ENCODE measurements at regions of chr21 and their contacts with region 1.

Region 1: DNA sequence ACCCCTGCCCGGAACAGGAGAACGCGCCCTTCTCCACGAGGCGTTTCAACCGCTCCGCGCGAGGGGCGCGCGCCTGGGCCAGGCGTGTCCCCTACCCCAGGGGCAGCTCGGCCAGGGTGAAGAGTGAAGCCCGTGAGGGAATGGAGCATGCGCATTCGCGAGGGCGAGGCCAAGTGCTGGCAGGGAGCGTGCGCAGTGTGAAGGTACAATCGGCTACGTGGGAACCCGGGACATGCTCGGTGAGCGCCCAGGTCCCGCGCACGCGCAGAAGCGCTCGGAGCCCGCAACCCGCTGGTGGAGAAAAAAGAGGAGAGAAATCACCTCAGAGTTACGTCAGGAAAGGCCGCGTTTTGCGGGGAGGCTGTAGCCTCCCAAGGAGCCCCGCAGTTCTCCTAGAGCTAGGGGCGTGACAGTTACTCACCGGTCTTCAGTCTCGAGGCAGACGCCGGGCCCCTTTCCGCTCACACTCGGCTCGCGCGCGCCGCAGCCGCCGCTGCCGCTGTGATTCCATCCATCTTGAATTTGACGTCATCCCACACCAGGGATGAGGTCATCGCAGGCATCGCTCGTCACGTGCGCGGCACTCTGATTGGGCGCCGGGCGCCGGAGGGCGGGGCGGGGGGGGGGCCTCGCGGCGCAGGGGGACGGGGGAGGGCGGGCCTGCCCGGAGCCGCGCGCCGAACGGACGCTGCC is at the start of gene ZBTB21:
- DNase-seq: peak; percentile 99
- H3K4me3 ChIP-seq: peak within 1 kb of the TSS; percentile 80
- H3K27ac ChIP-seq: peak within 1 kb of the TSS; percentile 99
- H3K4me1 ChIP-seq: no peaks in the 10 kb centered on the region
- H3K27me3 ChIP-seq: no peaks in the 10 kb centered on the region
- CTCF ChIP-seq: no peak
- total RNA-seq, gene ZBTB21: 10.2 to 15.1 TPM

Region 2: GRCh38 chr21:41884501-41885030 is 125.4 kb before region 1 on chr21:
- intact Hi-C with region 1: loop called (anchors 5 kb)
- DNase-seq: no peak
- H3K4me3 ChIP-seq: no peak overlapping the region
- H3K27ac ChIP-seq: no peak overlapping the region
- H3K4me1 ChIP-seq: no peaks in the 10 kb centered on the region
- H3K27me3 ChIP-seq: no peaks in the 10 kb centered on the region
- CTCF ChIP-seq: no peak

Region 3: GRCh38 chr21:42107881-42108553 is 98.0 kb after region 1 on chr21:
- intact Hi-C with region 1: loop called (anchors 5 kb)
- DNase-seq: peak; percentile 65
- H3K4me3 ChIP-seq: no peak overlapping the region
- H3K27ac ChIP-seq: no peak overlapping the region
- H3K4me1 ChIP-seq: no peaks in the 10 kb centered on the region
- H3K27me3 ChIP-seq: no peaks in the 10 kb centered on the region
- CTCF ChIP-seq: peak; percentile 73

Region 4: GRCh38 chr21:42286416-42286815 is 276.4 kb after region 1 on chr21:
- intact Hi-C with region 1: no loop called
- DNase-seq: no peak
- H3K4me3 ChIP-seq: no peak overlapping the region
- H3K27ac ChIP-seq: no peak overlapping the region
- H3K4me1 ChIP-seq: no peaks in the 10 kb centered on the region
- H3K27me3 ChIP-seq: no peaks in the 10 kb centered on the region
- CTCF ChIP-seq: no peak

Measured in colonic mucosa (tissue), 4 donors.